Heart right ventricle (tissue), 16 donors: ENCODE measurements at regions of chr13 and their contacts with region 1.

Region 1: GRCh38 chr13:71681901-71682613 is 184.9 kb downstream of the DACH1 start:
- DNase-seq: no peak
- ATAC-seq: no peak
- H3K4me3 ChIP-seq: no peak overlapping the region
- H3K27ac ChIP-seq: no peak overlapping the region
- H3K4me1 ChIP-seq: no peaks in the 10 kb centered on the region
- H3K27me3 ChIP-seq: no peaks in the 10 kb centered on the region
- CTCF ChIP-seq: no peak

Region 2: GRCh38 chr13:70938462-70938861 is 743.6 kb before region 1 on chr13:
- intact Hi-C with region 1: loop called in 1 of 10 experiments (anchors 5 kb)
- DNase-seq: no peak
- ATAC-seq: no peak
- H3K4me3 ChIP-seq: no peak overlapping the region
- H3K27ac ChIP-seq: no peak overlapping the region
- H3K4me1 ChIP-seq: no peaks in the 10 kb centered on the region
- H3K27me3 ChIP-seq: no peaks in the 10 kb centered on the region
- CTCF ChIP-seq: no peak